ENCODE measurements at regions of chr11 and their contacts with region 1.

Region 1: DNA sequence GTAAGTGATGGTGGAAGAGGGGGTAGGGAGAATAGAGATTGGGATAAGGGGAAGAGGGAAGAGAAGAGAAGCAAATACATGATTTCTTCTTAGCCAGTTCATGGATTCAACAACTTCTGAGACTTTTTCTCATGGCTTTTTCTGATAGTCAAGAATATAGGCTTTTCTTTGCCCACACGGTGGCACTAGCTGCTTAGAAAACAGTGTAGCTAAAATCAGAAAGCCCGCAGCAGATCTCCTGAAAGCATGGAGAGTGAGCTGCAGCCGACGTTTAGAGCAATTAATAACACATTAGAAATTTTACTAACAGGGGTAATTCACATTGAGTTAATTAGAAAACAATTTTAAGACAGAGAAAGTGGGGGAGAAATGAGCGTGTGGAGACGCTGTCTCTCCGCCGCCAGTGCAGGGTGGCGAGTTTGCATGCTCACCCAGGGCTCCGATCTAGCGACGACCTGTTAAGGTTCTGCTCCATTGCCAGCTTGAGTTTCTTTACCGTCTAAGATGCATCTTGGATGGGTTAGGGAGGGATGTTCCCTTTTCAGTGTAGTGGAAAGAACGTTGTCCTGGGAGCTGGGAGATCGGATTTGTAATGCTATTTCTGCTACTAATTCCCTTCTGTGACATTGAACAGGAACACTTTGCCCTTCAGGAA is 3.3 kb upstream of the RAG1 start:
- DNase-seq: peak in 3 of 6 donors; percentile 34 to 63 (median 35)
- ATAC-seq: peak; percentile 82 to 98 (median 94)
- H3K4me3 ChIP-seq: peak overlapping the region in 2 of 4 donors; percentile 32 to 38
- H3K27ac ChIP-seq: no peak overlapping the region
- H3K4me1 ChIP-seq: no peaks in the 10 kb centered on the region
- H3K27me3 ChIP-seq: no peaks in the 10 kb centered on the region
- CTCF ChIP-seq: peak in 3 of 4 donors; percentile 32 to 49 (median 44)

Region 2: GRCh38 chr11:36326524-36327419 is 237.7 kb before region 1 on chr11:
- intact Hi-C with region 1: no loop called
- DNase-seq: no peak
- ATAC-seq: no peak
- H3K4me3 ChIP-seq: no peak overlapping the region
- H3K27ac ChIP-seq: no peak overlapping the region
- H3K4me1 ChIP-seq: no peaks in the 10 kb centered on the region
- H3K27me3 ChIP-seq: peaks cover 0 to 3% (median 0%) of the 10 kb centered on the region in 4 donors
- CTCF ChIP-seq: no peak

Region 3: DNA sequence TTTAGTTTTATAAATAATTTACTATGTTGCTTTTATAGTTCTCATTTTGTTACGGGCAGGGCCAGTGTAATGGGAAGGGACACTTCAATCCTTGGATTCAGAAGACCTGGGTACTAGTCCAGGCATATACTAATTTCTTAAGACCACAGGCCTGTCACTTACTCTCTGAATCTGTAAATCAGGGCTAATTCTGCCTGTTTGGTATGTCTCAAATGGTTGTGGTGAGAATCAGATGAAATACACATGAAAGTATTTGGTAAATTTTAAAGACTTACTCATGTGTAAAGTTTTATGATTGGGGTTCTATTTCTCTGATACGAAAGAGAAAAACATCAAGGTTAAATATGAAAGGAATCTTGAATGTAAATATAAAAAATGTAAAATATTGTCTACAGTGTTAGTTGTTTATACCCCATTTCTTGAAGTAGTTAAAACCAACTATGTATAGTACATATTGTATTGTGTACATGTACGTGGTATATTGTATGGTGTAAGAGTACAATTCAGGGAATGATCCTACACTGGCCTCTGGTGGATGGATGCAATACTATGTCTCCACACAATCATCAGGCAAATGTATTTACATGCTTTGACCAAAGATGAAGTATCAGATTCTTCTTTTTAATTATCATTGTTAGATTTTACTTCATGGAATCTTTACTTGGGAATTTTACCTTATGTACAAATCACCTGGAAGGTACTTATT is 58.1 kb after region 1 on chr11:
- intact Hi-C with region 1: loop called in 1 of 3 experiments (anchors 5 kb)
- DNase-seq: no peak
- ATAC-seq: peak in 3 of 4 donors; percentile 63 to 79 (median 67)
- H3K4me3 ChIP-seq: no peak overlapping the region
- H3K27ac ChIP-seq: no peak overlapping the region
- H3K4me1 ChIP-seq: peaks cover 0 to 6% (median 0%) of the 10 kb centered on the region in 3 donors
- H3K27me3 ChIP-seq: no peaks in the 10 kb centered on the region
- CTCF ChIP-seq: no peak

Region 4: GRCh38 chr11:36672813-36673450 is 108.4 kb after region 1 on chr11:
- intact Hi-C with region 1: loop called in 2 of 3 experiments (anchors 5 kb)
- DNase-seq: no peak
- ATAC-seq: peak in 2 of 4 donors; percentile 64 to 68
- H3K4me3 ChIP-seq: no peak overlapping the region
- H3K27ac ChIP-seq: no peak overlapping the region
- H3K4me1 ChIP-seq: no peaks in the 10 kb centered on the region
- H3K27me3 ChIP-seq: no peaks in the 10 kb centered on the region
- CTCF ChIP-seq: peak; percentile 73 to 95 (median 82)

Region 5: GRCh38 chr11:36746886-36747710 is 182.6 kb after region 1 on chr11:
- intact Hi-C with region 1: loop called in 1 of 3 experiments (anchors 10 kb)
- DNase-seq: peak; percentile 80 to 91 (median 82)
- ATAC-seq: peak; percentile 95 to 100 (median 99)
- H3K4me3 ChIP-seq: no peak overlapping the region
- H3K27ac ChIP-seq: no peak overlapping the region
- H3K4me1 ChIP-seq: peaks cover 0 to 5% (median 0%) of the 10 kb centered on the region in 3 donors
- H3K27me3 ChIP-seq: peaks cover 0 to 3% (median 0%) of the 10 kb centered on the region in 4 donors
- CTCF ChIP-seq: peak; percentile 94 to 99 (median 96)

Measured in pancreas (tissue), 10 donors.